Caco-2 (cell line): ENCODE measurements at regions of chr2 and their contacts with region 1.

Region 1: GRCh38 chr2:45935791-45936622 is 284.5 kb downstream of the PRKCE start:
- DNase-seq: peak; percentile 85
- H3K4me3 ChIP-seq: no peak overlapping the region
- H3K4me3 Mint-ChIP-seq: no peak overlapping the region
- H3K27ac Mint-ChIP-seq: no peak overlapping the region
- H3K4me1 ChIP-seq: peaks cover 20% of the 10 kb centered on the region
- H3K4me1 Mint-ChIP-seq: peaks cover 20% of the 10 kb centered on the region
- H3K27me3 ChIP-seq: no peaks in the 10 kb centered on the region
- H3K27me3 Mint-ChIP-seq: no peaks in the 10 kb centered on the region
- CTCF ChIP-seq: peak; percentile 79 to 82

Region 2: DNA sequence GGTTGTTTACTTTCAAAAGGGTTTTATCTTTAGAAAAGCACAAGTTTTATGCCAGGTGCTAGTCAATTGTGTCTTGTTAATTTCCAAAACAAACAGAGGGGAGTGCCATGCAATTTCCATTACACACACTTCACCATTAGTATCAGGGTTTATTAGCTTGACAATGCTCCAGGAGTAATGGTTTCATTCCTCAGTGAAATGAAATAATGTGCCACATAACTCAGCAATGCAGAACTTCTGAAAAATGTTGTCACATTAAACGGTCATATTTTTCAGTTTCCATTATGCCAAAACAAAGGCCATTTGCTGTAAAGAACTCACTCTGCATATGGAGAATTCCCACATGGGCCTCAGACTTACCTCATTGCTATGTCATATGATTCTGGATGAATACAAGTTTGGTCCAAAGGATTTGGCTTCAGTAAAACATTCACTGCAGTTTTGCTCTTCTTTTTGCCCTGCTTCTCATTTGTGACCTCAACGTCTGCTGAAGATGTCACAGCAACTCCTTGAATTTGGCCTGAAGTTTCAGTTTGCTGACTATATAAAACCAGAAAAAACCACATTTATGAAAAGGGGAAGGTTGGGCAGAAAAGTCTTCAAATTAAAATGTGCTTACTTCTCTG is 523.1 kb before region 1 on chr2:
- CTCF ChIA-PET with region 1: no interaction called
- POLR2A ChIA-PET with region 1: no interaction called
- intact Hi-C with region 1: no loop called
- DNase-seq: no peak
- H3K4me3 ChIP-seq: no peak overlapping the region
- H3K4me3 Mint-ChIP-seq: no peak overlapping the region
- H3K27ac Mint-ChIP-seq: no peak overlapping the region
- H3K4me1 ChIP-seq: no peaks in the 10 kb centered on the region
- H3K4me1 Mint-ChIP-seq: no peaks in the 10 kb centered on the region
- H3K27me3 ChIP-seq: no peaks in the 10 kb centered on the region
- H3K27me3 Mint-ChIP-seq: no peaks in the 10 kb centered on the region
- CTCF ChIP-seq: no peak

Region 3: GRCh38 chr2:45771261-45771660 is 164.7 kb before region 1 on chr2:
- CTCF ChIA-PET with region 1: no interaction called
- POLR2A ChIA-PET with region 1: no interaction called
- intact Hi-C with region 1: loop called (anchors 1 kb)
- DNase-seq: peak; percentile 42 to 53
- H3K4me3 ChIP-seq: no peak overlapping the region
- H3K4me3 Mint-ChIP-seq: no peak overlapping the region
- H3K27ac Mint-ChIP-seq: no peak overlapping the region
- H3K4me1 ChIP-seq: no peaks in the 10 kb centered on the region
- H3K4me1 Mint-ChIP-seq: peaks cover 3% of the 10 kb centered on the region
- H3K27me3 ChIP-seq: no peaks in the 10 kb centered on the region; the same call in 1 of the 2 replicates
- H3K27me3 Mint-ChIP-seq: peaks cover 4% of the 10 kb centered on the region
- CTCF ChIP-seq: no peak

Region 4: GRCh38 chr2:45778720-45779171 is 157.3 kb before region 1 on chr2:
- CTCF ChIA-PET with region 1: interaction called, 14 read pairs
- POLR2A ChIA-PET with region 1: no interaction called
- intact Hi-C with region 1: loop called (anchors 1 kb)
- DNase-seq: peak; percentile 77 to 83
- H3K4me3 ChIP-seq: no peak overlapping the region
- H3K4me3 Mint-ChIP-seq: no peak overlapping the region
- H3K27ac Mint-ChIP-seq: no peak overlapping the region
- H3K4me1 ChIP-seq: 0 out of 2 replicates have a peak, but pooled peaks cover 5% of the 10 kb centered on the region
- H3K4me1 Mint-ChIP-seq: no peaks in the 10 kb centered on the region
- H3K27me3 ChIP-seq: no peaks in the 10 kb centered on the region; the same call in 1 of the 2 replicates
- H3K27me3 Mint-ChIP-seq: no peaks in the 10 kb centered on the region
- CTCF ChIP-seq: peak; percentile 55 to 64

Region 5: GRCh38 chr2:45812011-45812500 is 124.0 kb before region 1 on chr2:
- CTCF ChIA-PET with region 1: no interaction called
- POLR2A ChIA-PET with region 1: no interaction called
- intact Hi-C with region 1: no loop called
- DNase-seq: no peak
- H3K4me3 ChIP-seq: no peak overlapping the region
- H3K4me3 Mint-ChIP-seq: no peak overlapping the region
- H3K27ac Mint-ChIP-seq: no peak overlapping the region
- H3K4me1 ChIP-seq: no peaks in the 10 kb centered on the region
- H3K4me1 Mint-ChIP-seq: no peaks in the 10 kb centered on the region
- H3K27me3 ChIP-seq: 0 out of 2 replicates have a peak, but pooled peaks cover 2% of the 10 kb centered on the region
- H3K27me3 Mint-ChIP-seq: peaks cover 16% of the 10 kb centered on the region
- CTCF ChIP-seq: no peak

Region 6: DNA sequence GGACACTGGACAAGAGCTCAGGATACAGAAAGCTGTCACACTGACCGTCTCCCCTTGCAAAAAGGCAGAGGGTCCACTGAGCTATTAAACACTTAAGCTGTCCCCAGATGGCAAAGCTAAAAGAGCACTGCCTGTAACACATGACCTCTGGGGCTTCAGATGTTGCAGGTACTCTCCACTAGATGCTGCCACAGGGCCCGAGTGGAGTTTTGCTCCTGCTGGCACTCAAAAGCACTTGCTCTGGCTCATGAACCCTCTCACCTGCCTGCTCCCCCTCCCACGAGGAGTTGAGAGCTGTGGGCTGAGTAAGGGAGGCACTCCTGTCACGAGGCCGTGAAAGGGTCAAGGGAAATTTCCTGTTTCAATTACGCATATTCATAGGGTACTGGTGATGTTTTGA is 56.6 kb before region 1 on chr2:
- CTCF ChIA-PET with region 1: no interaction called
- POLR2A ChIA-PET with region 1: no interaction called
- intact Hi-C with region 1: loop called (anchors 1 kb)
- DNase-seq: peak in 1 of 2 experiments; percentile 35
- H3K4me3 ChIP-seq: no peak overlapping the region
- H3K4me3 Mint-ChIP-seq: no peak overlapping the region
- H3K27ac Mint-ChIP-seq: no peak overlapping the region
- H3K4me1 ChIP-seq: no peaks in the 10 kb centered on the region
- H3K4me1 Mint-ChIP-seq: no peaks in the 10 kb centered on the region
- H3K27me3 ChIP-seq: no peaks in the 10 kb centered on the region
- H3K27me3 Mint-ChIP-seq: no peaks in the 10 kb centered on the region
- CTCF ChIP-seq: peak; percentile 22 to 59

Region 7: DNA sequence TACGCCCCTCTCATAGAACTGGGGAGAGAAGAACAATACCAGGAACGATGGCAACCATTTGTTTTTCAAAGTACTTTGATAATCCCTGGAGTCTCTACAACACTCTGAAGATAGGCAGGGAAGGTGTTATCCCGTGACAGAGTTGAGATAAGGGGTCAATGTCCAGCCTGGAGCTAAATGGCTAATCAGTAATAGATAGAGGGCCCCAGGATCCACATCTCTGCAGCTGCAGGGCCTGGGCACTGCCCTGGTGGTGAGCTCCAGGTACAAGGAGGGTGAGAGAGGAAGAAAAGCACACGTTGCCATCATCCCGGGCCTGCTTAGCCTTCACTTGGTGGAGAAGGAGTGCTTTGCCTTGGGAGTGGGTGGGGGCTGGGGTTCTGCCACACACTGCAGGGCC is 23.9 kb before region 1 on chr2:
- CTCF ChIA-PET with region 1: interaction called, 6 read pairs
- POLR2A ChIA-PET with region 1: no interaction called
- intact Hi-C with region 1: loop called (anchors 1 kb)
- DNase-seq: peak; percentile 85 to 86
- H3K4me3 ChIP-seq: no peak overlapping the region
- H3K4me3 Mint-ChIP-seq: peak overlapping the region; percentile 28
- H3K27ac Mint-ChIP-seq: peak overlapping the region; percentile 97
- H3K4me1 ChIP-seq: peaks cover 54% of the 10 kb centered on the region
- H3K4me1 Mint-ChIP-seq: peaks cover 51% of the 10 kb centered on the region
- H3K27me3 ChIP-seq: no peaks in the 10 kb centered on the region
- H3K27me3 Mint-ChIP-seq: no peaks in the 10 kb centered on the region
- CTCF ChIP-seq: no peak

Region 8: GRCh38 chr2:45962522-45962921 is 26.5 kb after region 1 on chr2:
- CTCF ChIA-PET with region 1: no interaction called
- POLR2A ChIA-PET with region 1: no interaction called
- intact Hi-C with region 1: loop called (anchors 2 kb)
- DNase-seq: no peak
- H3K4me3 ChIP-seq: no peak overlapping the region
- H3K4me3 Mint-ChIP-seq: no peak overlapping the region
- H3K27ac Mint-ChIP-seq: peak overlapping the region; percentile 69
- H3K4me1 ChIP-seq: peaks cover 32% of the 10 kb centered on the region
- H3K4me1 Mint-ChIP-seq: peaks cover 20% of the 10 kb centered on the region
- H3K27me3 ChIP-seq: no peaks in the 10 kb centered on the region
- H3K27me3 Mint-ChIP-seq: no peaks in the 10 kb centered on the region
- CTCF ChIP-seq: no peak

Region 9: GRCh38 chr2:45986519-45986918 is 50.5 kb after region 1 on chr2:
- CTCF ChIA-PET with region 1: no interaction called
- POLR2A ChIA-PET with region 1: no interaction called
- intact Hi-C with region 1: no loop called
- DNase-seq: no peak
- H3K4me3 ChIP-seq: no peak overlapping the region
- H3K4me3 Mint-ChIP-seq: no peak overlapping the region
- H3K27ac Mint-ChIP-seq: no peak overlapping the region
- H3K4me1 ChIP-seq: no peaks in the 10 kb centered on the region
- H3K4me1 Mint-ChIP-seq: peaks cover under 1% of the 10 kb centered on the region
- H3K27me3 ChIP-seq: no peaks in the 10 kb centered on the region; the same call in 1 of the 2 replicates
- H3K27me3 Mint-ChIP-seq: peaks cover 4% of the 10 kb centered on the region
- CTCF ChIP-seq: no peak

Region 10: DNA sequence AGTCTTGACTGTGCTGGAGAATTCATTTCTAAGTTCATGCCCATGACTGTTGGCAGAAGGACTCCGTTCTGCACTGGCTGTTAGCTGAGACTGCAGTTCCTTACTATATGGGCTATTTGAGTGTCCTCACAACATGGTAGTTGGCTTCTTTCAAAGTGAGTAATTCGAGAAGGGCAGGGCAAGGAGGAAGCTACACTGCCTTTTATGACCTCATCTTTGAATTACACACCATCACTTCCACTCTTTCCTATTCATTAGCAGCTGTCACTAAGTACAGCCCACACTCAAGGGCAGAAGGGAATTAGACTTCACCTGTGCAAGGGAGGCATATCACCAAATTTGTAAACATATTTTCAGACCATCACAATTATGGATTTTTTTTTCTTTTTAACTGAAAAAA is 305.3 kb after region 1 on chr2:
- CTCF ChIA-PET with region 1: no interaction called
- POLR2A ChIA-PET with region 1: no interaction called
- intact Hi-C with region 1: no loop called
- DNase-seq: no peak
- H3K4me3 ChIP-seq: no peak overlapping the region
- H3K4me3 Mint-ChIP-seq: no peak overlapping the region
- H3K27ac Mint-ChIP-seq: no peak overlapping the region
- H3K4me1 ChIP-seq: no peaks in the 10 kb centered on the region
- H3K4me1 Mint-ChIP-seq: no peaks in the 10 kb centered on the region
- H3K27me3 ChIP-seq: no peaks in the 10 kb centered on the region; the same call in 1 of the 2 replicates
- H3K27me3 Mint-ChIP-seq: no peaks in the 10 kb centered on the region
- CTCF ChIP-seq: no peak